Mammary epithelial cell (primary cell): ENCODE measurements at regions of chr6 and their contacts with region 1.

Region 1: GRCh38 chr6:16635810-16636602 is 125.3 kb downstream of the ATXN1 start:
- DNase-seq: peak; percentile 80
- H3K4me3 ChIP-seq: no peak overlapping the region
- H3K27ac ChIP-seq: no peak overlapping the region
- H3K4me1 ChIP-seq: peaks cover 29% of the 10 kb centered on the region
- H3K27me3 ChIP-seq: no peaks in the 10 kb centered on the region
- CTCF ChIP-seq: no peak

Region 2: DNA sequence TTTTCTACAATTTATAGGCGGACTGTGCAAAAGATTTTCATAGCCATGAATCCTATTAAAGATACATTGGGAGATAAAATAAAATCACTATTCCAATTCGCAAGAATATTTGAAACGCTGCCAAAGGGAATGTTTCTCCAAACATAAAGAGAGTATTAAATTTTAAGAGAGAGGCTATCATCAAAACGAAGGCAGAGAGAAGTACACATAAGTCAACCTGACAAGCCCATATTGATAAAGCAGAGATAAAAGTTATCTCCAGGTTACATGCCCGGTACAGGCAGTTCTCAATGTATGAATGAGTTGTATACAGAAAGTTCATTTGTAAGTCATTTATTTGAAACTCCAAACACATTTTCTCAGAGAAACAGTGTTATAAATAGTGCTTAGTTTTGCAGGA is 67.9 kb before region 1 on chr6:
- CTCF ChIA-PET with region 1: no interaction called
- dilution Hi-C with region 1: loop called (anchors 5 kb)
- in situ Hi-C with region 1: no loop called
- intact Hi-C with region 1: no loop called
- DNase-seq: no peak
- H3K4me3 ChIP-seq: no peak overlapping the region
- H3K27ac ChIP-seq: no peak overlapping the region
- H3K4me1 ChIP-seq: no peaks in the 10 kb centered on the region
- H3K27me3 ChIP-seq: no peaks in the 10 kb centered on the region
- CTCF ChIP-seq: no peak

Region 3: DNA sequence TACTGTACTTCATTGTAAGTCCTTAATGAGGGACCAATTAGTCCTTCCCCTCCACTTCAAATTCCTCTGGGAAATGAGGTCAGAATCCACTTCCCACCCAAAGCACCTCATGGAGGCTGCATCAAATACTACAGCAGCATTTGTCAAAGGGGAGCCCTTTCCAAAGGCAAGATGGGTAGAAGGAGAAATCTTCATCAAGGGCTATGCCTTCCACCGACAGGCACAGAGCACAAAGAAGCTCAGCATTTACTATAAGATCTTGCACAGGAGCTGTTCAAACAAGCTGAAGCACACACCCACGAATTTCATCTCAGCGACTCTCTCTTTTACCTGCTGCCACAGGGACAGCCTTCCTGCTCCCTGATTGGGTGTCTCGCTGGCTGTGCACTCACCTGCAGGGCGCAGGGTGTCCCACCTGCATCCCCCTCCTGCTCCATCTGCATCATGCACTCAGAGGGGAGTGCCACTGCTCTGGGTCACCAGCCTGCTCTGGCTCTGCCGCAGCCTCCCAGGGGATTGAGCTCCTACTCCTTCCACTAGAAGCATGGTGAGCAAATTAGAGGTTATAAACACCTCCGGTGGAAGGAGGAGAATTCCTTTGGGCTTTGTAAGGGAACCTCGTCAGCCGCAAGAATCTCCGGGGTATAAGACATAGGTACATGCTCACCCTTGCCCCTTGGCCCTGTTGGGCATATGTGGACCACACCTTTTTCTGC is 39.2 kb before region 1 on chr6:
- CTCF ChIA-PET with region 1: no interaction called
- dilution Hi-C with region 1: no loop called
- in situ Hi-C with region 1: no loop called
- intact Hi-C with region 1: loop called (anchors 5 kb)
- DNase-seq: peak; percentile 82
- H3K4me3 ChIP-seq: peak overlapping the region in 2 of 3 experiments; percentile 12 to 41
- H3K27ac ChIP-seq: peak overlapping the region; percentile 59
- H3K4me1 ChIP-seq: peaks cover 38% of the 10 kb centered on the region
- H3K27me3 ChIP-seq: no peaks in the 10 kb centered on the region
- CTCF ChIP-seq: no peak